ENCODE measurements at regions of chr1 and their contacts with region 1.

Region 1: GRCh38 chr1:212477014-212477679 is 44.4 kb downstream of the NENF start:
- DNase-seq: peak; percentile 96
- H3K4me3 Mint-ChIP-seq: no peak overlapping the region
- H3K27ac Mint-ChIP-seq: peak overlapping the region; percentile 46
- H3K4me1 Mint-ChIP-seq: peaks cover 17% of the 10 kb centered on the region
- H3K27me3 Mint-ChIP-seq: no peaks in the 10 kb centered on the region
- CTCF ChIP-seq: peak; percentile 99

Region 2: GRCh38 chr1:212514056-212514614 is 37.0 kb after region 1 on chr1:
- CTCF ChIA-PET with region 1: interaction called, 19 read pairs
- POLR2A ChIA-PET with region 1: no interaction called
- intact Hi-C with region 1: no loop called
- DNase-seq: peak; percentile 90
- H3K4me3 Mint-ChIP-seq: no peak overlapping the region
- H3K27ac Mint-ChIP-seq: peak overlapping the region; percentile 11
- H3K4me1 Mint-ChIP-seq: no peaks in the 10 kb centered on the region
- H3K27me3 Mint-ChIP-seq: peaks cover 38% of the 10 kb centered on the region
- CTCF ChIP-seq: no peak

Region 3: DNA sequence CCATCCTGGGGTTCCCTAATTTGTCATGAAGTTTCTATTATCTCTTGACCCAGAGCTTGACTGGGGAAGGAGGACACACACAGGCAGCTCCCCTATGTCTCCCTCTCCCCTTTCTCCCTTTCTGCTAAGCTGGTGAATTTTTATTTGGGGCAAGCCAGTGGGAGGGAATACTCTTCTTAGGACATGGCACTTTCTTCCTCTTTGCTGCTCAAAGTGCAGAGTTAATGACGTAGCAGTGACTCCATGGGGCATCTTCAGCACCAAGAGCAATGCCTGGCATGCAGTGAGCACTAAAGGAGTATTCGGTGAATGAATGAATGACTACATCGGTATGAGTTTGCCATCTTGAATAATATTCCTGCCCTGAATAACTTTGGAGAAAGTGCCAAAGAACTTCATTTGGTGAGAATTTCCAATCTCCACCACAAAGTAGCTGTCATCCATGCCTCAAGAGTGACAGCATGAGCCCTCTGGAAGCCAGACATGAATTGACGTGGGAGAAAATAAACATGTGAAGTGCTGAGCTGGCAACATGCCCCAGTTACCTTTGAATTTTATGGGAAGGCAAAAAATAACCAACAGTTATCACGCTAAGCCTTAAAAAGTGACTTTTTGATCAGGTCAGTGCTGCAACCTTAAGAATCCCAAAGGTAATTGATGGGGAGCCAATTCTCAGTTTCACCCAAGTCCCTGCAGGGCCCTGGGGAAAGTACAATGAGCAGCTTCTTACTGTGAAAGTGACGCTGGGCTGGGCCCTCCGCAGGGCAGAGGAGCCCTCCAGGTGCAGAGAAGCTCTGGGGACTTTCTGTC is 109.3 kb after region 1 on chr1:
- CTCF ChIA-PET with region 1: interaction called, 32 read pairs
- POLR2A ChIA-PET with region 1: interaction called, 6 read pairs
- intact Hi-C with region 1: no loop called
- DNase-seq: no peak
- H3K4me3 Mint-ChIP-seq: no peak overlapping the region
- H3K27ac Mint-ChIP-seq: no peak overlapping the region
- H3K4me1 Mint-ChIP-seq: peaks cover 6% of the 10 kb centered on the region
- H3K27me3 Mint-ChIP-seq: peaks cover 38% of the 10 kb centered on the region
- CTCF ChIP-seq: no peak

Region 4: GRCh38 chr1:212630158-212630900 is 153.2 kb after region 1 on chr1:
- CTCF ChIA-PET with region 1: interaction called, 32 read pairs
- POLR2A ChIA-PET with region 1: no interaction called
- intact Hi-C with region 1: loop called (anchors 1 kb)
- DNase-seq: peak; percentile 79
- H3K4me3 Mint-ChIP-seq: no peak overlapping the region
- H3K27ac Mint-ChIP-seq: no peak overlapping the region
- H3K4me1 Mint-ChIP-seq: no peaks in the 10 kb centered on the region
- H3K27me3 Mint-ChIP-seq: peaks cover 13% of the 10 kb centered on the region
- CTCF ChIP-seq: peak; percentile 99

Region 5: DNA sequence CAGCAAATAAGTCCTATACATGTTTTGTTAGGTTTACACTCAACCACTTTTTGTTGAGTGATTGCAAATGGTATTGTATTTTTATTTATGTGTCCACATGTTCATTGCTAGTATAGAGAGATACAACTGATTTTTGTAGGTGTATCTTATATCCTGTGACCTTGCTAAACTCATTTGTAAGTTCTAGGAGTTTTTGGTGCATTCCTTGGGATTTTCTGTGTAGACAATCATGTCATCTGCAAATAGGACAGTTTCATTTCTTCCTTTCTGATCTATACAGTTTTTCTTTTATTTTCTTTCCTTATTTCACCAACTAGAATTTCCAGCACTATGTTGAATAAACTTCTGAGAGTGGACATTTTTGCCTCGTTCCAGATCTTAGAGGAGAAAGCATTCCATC is 239.0 kb after region 1 on chr1:
- CTCF ChIA-PET with region 1: interaction called, 22 read pairs
- POLR2A ChIA-PET with region 1: interaction called, 3 read pairs
- intact Hi-C with region 1: loop called (anchors 1 kb)
- DNase-seq: no peak
- H3K4me3 Mint-ChIP-seq: no peak overlapping the region
- H3K27ac Mint-ChIP-seq: no peak overlapping the region
- H3K4me1 Mint-ChIP-seq: peaks cover 2% of the 10 kb centered on the region
- H3K27me3 Mint-ChIP-seq: peaks cover 39% of the 10 kb centered on the region
- CTCF ChIP-seq: no peak

Region 6: GRCh38 chr1:212774584-212774983 is 297.4 kb after region 1 on chr1:
- CTCF ChIA-PET with region 1: interaction called, 73 read pairs
- POLR2A ChIA-PET with region 1: interaction called, 3 read pairs
- intact Hi-C with region 1: no loop called
- DNase-seq: peak; percentile 57
- H3K4me3 Mint-ChIP-seq: no peak overlapping the region
- H3K27ac Mint-ChIP-seq: no peak overlapping the region
- H3K4me1 Mint-ChIP-seq: peaks cover 9% of the 10 kb centered on the region
- H3K27me3 Mint-ChIP-seq: no peaks in the 10 kb centered on the region
- CTCF ChIP-seq: no peak

Region 7: DNA sequence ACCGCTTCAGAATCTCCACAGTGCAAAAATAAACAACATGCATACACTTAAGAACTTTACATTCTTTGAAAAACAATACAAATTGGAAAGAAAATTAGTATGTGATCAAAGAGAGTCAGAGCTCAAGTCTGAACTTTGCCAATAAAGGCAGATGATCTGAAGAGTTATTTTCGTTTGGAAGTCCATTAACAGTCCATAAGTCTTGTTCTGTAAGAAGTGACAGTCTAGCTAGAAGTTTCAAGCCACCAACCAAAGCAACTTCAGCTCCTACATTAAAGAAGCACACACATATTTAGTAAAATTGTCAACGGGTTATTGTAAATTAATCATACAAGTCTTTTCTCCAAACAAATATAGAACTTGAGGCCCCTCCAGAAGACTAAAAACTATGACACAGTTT is 517.8 kb after region 1 on chr1:
- CTCF ChIA-PET with region 1: interaction called, 57 read pairs
- POLR2A ChIA-PET with region 1: no interaction called
- intact Hi-C with region 1: loop called (anchors 2 kb)
- DNase-seq: no peak
- H3K4me3 Mint-ChIP-seq: no peak overlapping the region
- H3K27ac Mint-ChIP-seq: no peak overlapping the region
- H3K4me1 Mint-ChIP-seq: no peaks in the 10 kb centered on the region
- H3K27me3 Mint-ChIP-seq: no peaks in the 10 kb centered on the region
- CTCF ChIP-seq: no peak